ENCODE measurements at regions of chr11 and their contacts with region 1.

Region 1: DNA sequence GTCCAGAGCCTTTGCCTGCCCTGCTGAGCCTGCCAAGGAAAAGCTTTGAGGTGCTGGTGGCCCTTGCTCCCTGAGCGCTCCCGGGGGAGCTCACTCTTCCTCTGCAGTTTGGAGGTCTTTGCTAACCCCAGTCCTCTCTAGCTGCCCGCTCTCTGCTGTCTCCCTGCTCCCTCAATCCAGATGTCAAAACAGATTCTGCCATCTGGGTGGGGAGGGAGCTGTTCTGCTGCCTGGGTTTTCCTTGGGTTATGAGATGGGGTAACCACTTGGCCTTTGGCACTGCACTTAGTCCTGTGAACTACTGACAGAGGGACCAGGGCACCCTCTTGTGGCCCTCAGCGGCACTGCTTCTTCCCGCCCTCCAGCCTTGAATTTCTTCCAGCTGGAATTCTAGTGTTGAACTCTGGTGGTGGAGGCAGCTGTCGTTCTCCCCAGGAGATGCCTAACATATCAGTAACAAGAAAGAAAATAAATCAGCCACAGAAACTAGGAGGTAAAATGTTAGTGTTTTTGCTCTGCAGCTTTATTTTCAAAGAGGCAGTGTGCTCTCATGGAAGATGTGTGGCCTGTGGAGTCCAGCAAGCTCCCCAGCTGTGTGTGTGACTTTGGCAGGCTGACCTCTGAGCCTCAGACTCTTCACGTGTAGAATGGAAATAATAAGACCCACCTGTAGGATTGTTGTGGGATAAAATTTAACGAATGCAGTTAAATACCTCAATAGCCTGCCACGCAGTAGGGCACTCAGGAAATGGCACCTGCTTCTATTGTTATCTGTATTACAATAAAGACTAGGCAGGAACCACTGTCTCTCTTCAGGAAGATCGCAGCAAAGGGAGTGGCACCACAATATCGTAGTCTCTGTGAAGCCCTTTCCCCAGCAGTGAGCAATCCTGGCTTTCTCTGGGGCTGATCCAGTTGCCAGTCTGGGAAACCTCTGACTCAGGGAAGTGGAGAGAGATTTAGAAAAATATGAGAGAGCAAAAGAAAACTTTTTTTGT is 23.4 kb downstream of the ARFGAP2 start:
- DNase-seq: peak; percentile 92
- ATAC-seq: peak; percentile 92
- H3K4me3 Mint-ChIP-seq: no peak overlapping the region
- H3K27ac Mint-ChIP-seq: peak overlapping the region; percentile 23; the same call in 1 of the 2 replicates
- H3K4me1 Mint-ChIP-seq: peaks cover 21% of the 10 kb centered on the region
- H3K27me3 Mint-ChIP-seq: no peaks in the 10 kb centered on the region
- CTCF ChIP-seq: peak; percentile 89

Region 2: GRCh38 chr11:46889689-46890475 is 263.4 kb before region 1 on chr11:
- CTCF ChIA-PET with region 1: interaction called, 17 read pairs
- POLR2A ChIA-PET with region 1: no interaction called
- DNase-seq: peak; percentile 80
- ATAC-seq: peak; percentile 95
- H3K4me3 Mint-ChIP-seq: no peak overlapping the region
- H3K27ac Mint-ChIP-seq: no peak overlapping the region; the same call in 1 of the 2 replicates
- H3K4me1 Mint-ChIP-seq: no peaks in the 10 kb centered on the region
- H3K27me3 Mint-ChIP-seq: no peaks in the 10 kb centered on the region
- CTCF ChIP-seq: peak; percentile 88

Region 3: DNA sequence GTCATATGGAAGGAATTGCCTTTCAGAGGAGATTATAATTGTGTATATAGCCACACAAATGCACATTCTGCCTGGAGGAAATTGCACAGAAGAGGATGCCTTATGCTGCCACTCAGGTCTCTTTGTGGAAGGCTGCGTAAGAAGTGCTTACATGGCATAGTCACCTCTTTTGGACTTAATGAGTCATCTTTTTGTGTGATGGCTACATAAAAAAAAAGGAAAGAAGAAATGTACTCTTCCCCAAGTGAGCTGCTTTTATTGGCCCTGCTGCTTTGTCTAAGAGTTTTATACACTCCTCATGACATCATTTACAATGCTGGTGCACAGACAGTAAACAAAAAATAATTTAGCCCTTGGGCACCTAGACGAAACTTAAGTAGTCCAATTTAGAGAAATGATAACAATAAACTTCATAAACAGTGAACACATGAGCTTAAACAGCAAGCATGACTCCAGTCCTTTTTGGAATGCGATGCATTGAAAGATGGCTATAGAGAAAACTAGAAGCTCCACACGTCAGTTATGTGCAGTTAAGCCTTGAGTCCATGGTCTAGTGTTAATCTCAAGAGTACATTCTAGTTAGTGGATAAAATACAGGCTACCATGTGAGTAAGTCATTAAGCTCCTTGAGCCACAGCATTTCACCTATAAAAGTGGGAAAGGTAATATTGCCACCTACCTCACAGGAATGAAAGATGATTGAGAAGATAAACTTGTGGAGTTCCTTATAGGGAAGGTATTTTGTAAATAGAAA is 204.7 kb before region 1 on chr11:
- CTCF ChIA-PET with region 1: interaction called, 13 read pairs
- POLR2A ChIA-PET with region 1: no interaction called
- DNase-seq: no peak
- ATAC-seq: no peak
- H3K4me3 Mint-ChIP-seq: no peak overlapping the region
- H3K27ac Mint-ChIP-seq: 0 out of 2 replicates have a peak overlapping the region, but pooled peaks have one; percentile 74
- H3K4me1 Mint-ChIP-seq: no peaks in the 10 kb centered on the region; the same call in 1 of the 2 replicates
- H3K27me3 Mint-ChIP-seq: no peaks in the 10 kb centered on the region
- CTCF ChIP-seq: no peak

Region 4: GRCh38 chr11:47020793-47021526 is 132.3 kb before region 1 on chr11:
- CTCF ChIA-PET with region 1: interaction called, 12 read pairs
- POLR2A ChIA-PET with region 1: no interaction called
- DNase-seq: no peak
- ATAC-seq: peak; percentile 76
- H3K4me3 Mint-ChIP-seq: no peak overlapping the region
- H3K27ac Mint-ChIP-seq: no peak overlapping the region
- H3K4me1 Mint-ChIP-seq: peaks cover 17% of the 10 kb centered on the region
- H3K27me3 Mint-ChIP-seq: no peaks in the 10 kb centered on the region
- CTCF ChIP-seq: no peak

Region 5: GRCh38 chr11:47093541-47093940 is 59.7 kb before region 1 on chr11:
- CTCF ChIA-PET with region 1: interaction called, 10 read pairs
- POLR2A ChIA-PET with region 1: no interaction called
- DNase-seq: no peak
- ATAC-seq: no peak
- H3K4me3 Mint-ChIP-seq: no peak overlapping the region
- H3K27ac Mint-ChIP-seq: no peak overlapping the region
- H3K4me1 Mint-ChIP-seq: no peaks in the 10 kb centered on the region
- H3K27me3 Mint-ChIP-seq: no peaks in the 10 kb centered on the region
- CTCF ChIP-seq: no peak

Region 6: GRCh38 chr11:47130543-47130942 is 22.7 kb before region 1 on chr11:
- CTCF ChIA-PET with region 1: interaction called, 16 read pairs
- POLR2A ChIA-PET with region 1: no interaction called
- DNase-seq: no peak
- ATAC-seq: peak; percentile 89
- H3K4me3 Mint-ChIP-seq: no peak overlapping the region
- H3K27ac Mint-ChIP-seq: 0 out of 2 replicates have a peak overlapping the region, but pooled peaks have one; percentile 19
- H3K4me1 Mint-ChIP-seq: peaks cover 27% of the 10 kb centered on the region
- H3K27me3 Mint-ChIP-seq: no peaks in the 10 kb centered on the region
- CTCF ChIP-seq: no peak

Region 7: GRCh38 chr11:47251751-47252150 is 98.5 kb after region 1 on chr11:
- CTCF ChIA-PET with region 1: no interaction called
- POLR2A ChIA-PET with region 1: no interaction called
- DNase-seq: no peak
- ATAC-seq: no peak
- H3K4me3 Mint-ChIP-seq: no peak overlapping the region
- H3K27ac Mint-ChIP-seq: peak overlapping the region; percentile 29; the same call in 1 of the 2 replicates
- H3K4me1 Mint-ChIP-seq: peaks cover 15% of the 10 kb centered on the region
- H3K27me3 Mint-ChIP-seq: no peaks in the 10 kb centered on the region
- CTCF ChIP-seq: no peak